ENCODE measurements at regions of chr9 and their contacts with region 1.

Region 1: DNA sequence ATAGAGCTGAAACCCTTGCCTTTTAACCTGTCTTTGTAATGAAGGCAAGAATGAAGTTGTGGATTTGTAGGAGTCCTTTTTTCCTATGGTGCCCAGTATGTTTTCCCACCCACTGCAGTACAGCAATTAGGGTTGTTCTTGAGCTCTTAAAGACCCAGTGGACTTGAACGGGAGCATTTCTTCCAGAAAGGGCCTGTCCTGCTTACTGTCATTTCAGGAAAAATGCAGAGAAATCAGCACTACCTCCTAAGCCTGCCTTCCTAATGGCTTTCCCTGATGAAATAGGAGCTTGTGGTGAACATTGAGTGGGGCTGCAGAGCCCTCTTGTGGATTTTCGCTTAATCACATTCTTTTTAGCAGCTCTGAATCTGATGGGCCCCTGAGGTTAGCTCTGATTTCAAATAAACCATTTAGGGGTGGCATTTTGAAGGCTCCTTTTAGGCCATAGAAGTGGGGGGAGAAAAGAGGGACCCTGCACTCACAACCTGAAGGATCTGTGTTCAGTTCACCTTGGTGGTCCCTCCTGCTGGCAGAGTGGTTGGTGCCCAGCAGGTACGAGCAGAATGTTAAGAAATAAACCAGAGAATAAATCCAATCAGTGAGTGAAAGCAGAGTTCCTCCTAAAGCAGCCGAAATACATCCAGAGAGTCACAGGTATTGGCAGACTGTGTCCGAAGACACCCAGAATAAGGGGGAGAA is 188.0 kb upstream of the KLF9 start:
- DNase-seq: peak; percentile 54
- H3K4me3 Mint-ChIP-seq: no peak overlapping the region
- H3K27ac Mint-ChIP-seq: no peak overlapping the region
- H3K4me1 Mint-ChIP-seq: peaks cover 7% of the 10 kb centered on the region
- H3K27me3 Mint-ChIP-seq: no peaks in the 10 kb centered on the region

Region 2: DNA sequence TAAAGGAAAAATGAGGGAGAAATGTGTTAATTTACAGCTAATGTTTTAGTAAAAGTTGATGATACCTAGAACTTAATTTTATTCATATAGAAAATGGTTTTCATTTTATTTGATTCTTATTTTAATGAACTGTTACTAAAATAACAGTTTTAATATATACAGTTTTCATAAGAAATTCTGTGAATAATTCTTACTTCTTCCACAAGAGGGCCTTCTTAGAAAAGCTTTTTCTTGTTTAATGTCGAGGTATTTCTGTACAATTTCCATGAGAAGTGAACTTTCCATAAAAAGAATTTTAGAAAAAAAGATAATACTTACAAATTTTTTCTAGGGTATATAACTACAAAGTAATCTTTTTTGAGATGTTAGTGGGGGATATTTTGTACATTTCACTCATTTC is 261.9 kb before region 1 on chr9:
- CTCF ChIA-PET with region 1: interaction called, 10 read pairs
- POLR2A ChIA-PET with region 1: no interaction called
- DNase-seq: no peak
- H3K4me3 Mint-ChIP-seq: no peak overlapping the region
- H3K27ac Mint-ChIP-seq: no peak overlapping the region
- H3K4me1 Mint-ChIP-seq: peaks cover 2% of the 10 kb centered on the region
- H3K27me3 Mint-ChIP-seq: no peaks in the 10 kb centered on the region

Region 3: GRCh38 chr9:70554881-70555280 is 47.6 kb before region 1 on chr9:
- CTCF ChIA-PET with region 1: no interaction called
- POLR2A ChIA-PET with region 1: no interaction called
- DNase-seq: no peak
- H3K4me3 Mint-ChIP-seq: no peak overlapping the region
- H3K27ac Mint-ChIP-seq: no peak overlapping the region
- H3K4me1 Mint-ChIP-seq: peaks cover 14% of the 10 kb centered on the region
- H3K27me3 Mint-ChIP-seq: no peaks in the 10 kb centered on the region

Measured in activated CD4-positive, alpha-beta T cell treated with anti-CD3 and anti-CD28 coated beads, Interleukin-2, amount 10 ng/mL, durations not matched to agents 7 days and 5 days (primary cell).